Calu3 (cell line): ENCODE measurements at regions of chr2 and their contacts with region 1.

Region 1: DNA sequence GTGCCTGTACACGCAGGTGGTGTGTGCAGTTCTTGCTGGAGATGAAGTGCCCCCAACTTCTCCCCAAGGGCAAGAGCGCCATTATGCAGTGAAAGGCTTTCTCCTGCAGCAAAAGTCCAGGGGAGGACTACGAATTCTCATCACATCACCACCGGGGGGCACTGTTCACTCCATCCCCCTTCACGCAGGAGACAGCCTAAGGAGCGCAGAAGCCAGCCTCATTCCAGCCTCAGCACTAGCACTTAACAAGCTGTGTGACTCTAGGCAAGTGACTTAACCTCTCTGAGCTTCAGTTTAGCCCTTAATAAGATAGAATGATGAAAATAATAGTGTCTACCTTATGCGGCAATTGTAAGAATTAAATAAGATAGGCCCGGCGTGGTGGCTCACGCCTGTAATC is 32.3 kb downstream of the DNMT3A start:
- DNase-seq: peak; percentile 54
- H3K4me3 Mint-ChIP-seq: no peak overlapping the region
- H3K27ac Mint-ChIP-seq: no peak overlapping the region
- H3K4me1 Mint-ChIP-seq: peaks cover 15% of the 10 kb centered on the region
- H3K27me3 Mint-ChIP-seq: no peaks in the 10 kb centered on the region
- CTCF ChIP-seq: no peak

Region 2: DNA sequence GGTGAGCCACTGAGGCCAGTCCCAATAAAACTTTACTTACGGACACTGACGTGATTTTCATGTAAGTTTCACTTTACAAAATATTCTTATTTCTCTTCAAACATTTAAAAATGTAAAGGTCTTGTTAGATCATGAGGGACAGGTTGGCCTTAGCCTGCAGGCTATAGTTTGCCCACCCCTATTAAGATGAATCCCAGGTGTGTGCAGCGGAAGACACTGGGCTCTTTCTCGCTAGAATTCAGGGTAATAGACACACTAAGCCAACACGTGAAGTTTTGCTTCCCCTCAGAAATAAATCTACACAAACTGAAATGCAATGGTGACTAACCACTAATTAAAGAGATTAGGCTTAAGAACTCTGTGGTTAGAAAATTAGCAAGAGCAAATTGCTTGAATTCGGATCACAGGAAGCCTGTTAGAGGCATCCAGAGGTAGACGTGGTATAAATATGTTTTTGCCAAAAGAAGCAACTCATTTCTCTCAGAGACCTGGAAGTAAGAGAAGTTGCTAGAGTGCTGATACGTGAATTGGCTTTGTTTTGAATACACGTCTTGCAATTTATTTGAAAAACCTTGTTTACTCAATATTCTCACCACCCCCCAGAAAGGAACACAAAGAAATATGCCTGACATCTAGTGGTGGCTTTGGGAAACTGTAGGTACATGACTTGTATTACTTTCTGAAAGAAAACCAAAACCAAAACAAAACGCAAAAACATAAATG is 212.4 kb after region 1 on chr2:
- CTCF ChIA-PET with region 1: no interaction called
- intact Hi-C with region 1: loop called (anchors 5 kb)
- DNase-seq: peak; percentile 26
- H3K4me3 Mint-ChIP-seq: peak overlapping the region; percentile 61
- H3K27ac Mint-ChIP-seq: peak overlapping the region; percentile 63
- H3K4me1 Mint-ChIP-seq: peaks cover 7% of the 10 kb centered on the region
- H3K27me3 Mint-ChIP-seq: no peaks in the 10 kb centered on the region
- CTCF ChIP-seq: peak; percentile 35